Right cardiac atrium (tissue), 5 donors: ENCODE measurements at regions of chr1 and their contacts with region 1.

Region 1: DNA sequence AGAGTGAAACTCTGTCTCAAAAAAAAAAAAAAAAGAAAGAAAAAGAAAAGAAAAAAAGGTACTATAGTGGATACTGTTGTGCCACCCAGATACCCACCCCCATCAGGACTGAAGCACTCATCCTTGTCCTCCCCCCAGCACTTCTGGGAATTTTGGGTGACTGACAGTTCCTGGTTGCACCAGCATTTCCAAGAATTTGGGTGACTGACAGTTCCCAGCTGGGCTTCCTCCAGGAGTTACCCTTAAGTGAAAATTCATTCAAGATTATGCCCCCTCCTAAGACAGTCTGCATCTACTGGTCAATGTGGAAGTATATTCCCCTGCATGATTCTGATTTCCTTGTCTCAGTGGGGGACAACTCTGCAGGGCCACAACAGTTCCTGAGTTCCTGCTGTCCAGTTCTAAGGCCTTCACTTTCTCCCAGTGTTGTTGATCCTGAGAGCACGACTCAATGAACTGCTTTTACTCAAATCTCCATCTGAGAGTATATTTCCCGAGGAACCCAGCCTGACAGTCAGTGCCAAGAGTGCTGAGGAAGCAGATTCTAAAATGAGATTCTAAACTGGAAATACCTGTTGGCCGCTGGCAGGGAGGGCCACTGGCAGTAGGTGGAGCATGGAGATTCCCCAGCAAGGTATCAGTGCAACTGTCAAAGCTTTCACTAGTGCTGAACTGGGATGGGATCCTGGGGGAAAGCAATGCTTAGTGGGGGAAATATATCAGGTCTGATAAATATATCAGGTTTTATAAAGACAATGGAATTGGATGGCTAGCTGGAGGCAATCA is 18.5 kb downstream of the RIIAD1 start:
- DNase-seq: no peak
- ATAC-seq: no peak
- H3K4me3 ChIP-seq: no peak overlapping the region
- H3K27ac ChIP-seq: no peak overlapping the region
- H3K4me1 ChIP-seq: no peaks in the 10 kb centered on the region
- H3K27me3 ChIP-seq: no peaks in the 10 kb centered on the region

Region 2: DNA sequence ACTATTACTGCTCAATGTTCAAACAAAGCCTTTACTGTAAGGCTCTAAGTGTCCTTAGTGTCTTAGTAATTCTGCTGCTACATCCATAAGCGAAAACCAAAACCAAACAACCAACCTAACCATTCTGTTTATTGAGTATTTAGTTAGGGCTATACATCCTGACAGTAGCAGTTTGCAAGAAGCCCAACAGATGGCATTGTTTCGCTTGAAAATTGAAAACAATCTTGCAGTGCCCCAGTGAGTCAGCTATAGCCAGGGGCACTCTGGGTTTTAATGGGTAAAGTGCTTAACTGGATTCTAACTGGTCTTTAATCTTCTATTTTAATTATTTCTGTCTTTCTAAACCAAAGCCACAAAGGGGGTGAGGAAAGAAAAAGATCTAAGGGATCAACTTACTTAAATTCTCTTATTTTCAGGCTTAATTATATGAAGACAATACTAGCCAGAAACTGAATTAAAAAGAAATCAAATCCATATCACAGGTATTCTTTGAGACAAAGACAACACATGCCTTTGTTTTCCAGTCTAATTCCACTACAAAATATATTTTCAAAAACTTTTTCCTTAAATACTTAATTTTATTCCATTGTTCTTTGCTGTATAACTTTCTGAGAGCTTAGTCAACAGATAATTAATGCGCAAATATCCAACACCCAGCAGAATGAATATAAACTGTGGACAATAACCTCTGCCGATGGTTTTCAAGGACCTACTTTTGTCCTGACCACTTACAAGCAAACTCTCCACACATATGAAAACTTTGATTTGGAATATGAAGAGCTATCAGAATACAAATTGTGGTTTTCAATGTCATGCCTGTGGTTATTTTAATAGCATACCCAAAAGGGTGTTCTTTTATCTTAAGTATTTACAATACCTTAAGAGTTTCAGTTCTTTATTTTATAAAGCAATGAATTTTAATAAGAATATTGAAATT is 295.7 kb before region 1 on chr1:
- intact Hi-C with region 1: loop called in 2 of 4 experiments (anchors 10 kb)
- DNase-seq: peak in 1 of 3 donors; percentile 20
- ATAC-seq: peak; percentile 87 to 89
- H3K4me3 ChIP-seq: no peak overlapping the region
- H3K27ac ChIP-seq: no peak overlapping the region
- H3K4me1 ChIP-seq: peaks cover 5% of the 10 kb centered on the region
- H3K27me3 ChIP-seq: no peaks in the 10 kb centered on the region

Region 3: GRCh38 chr1:151534665-151535278 is 205.0 kb before region 1 on chr1:
- intact Hi-C with region 1: loop called in 2 of 4 experiments (anchors 5 kb)
- DNase-seq: peak; percentile 75 to 92 (median 89)
- ATAC-seq: peak; percentile 71 to 74
- H3K4me3 ChIP-seq: no peak overlapping the region
- H3K27ac ChIP-seq: no peak overlapping the region
- H3K4me1 ChIP-seq: peaks cover 6% of the 10 kb centered on the region
- H3K27me3 ChIP-seq: no peaks in the 10 kb centered on the region

Region 4: GRCh38 chr1:151594143-151594625 is 145.6 kb before region 1 on chr1:
- intact Hi-C with region 1: loop called (anchors 5 to 10 kb)
- DNase-seq: peak; percentile 68 to 91 (median 85)
- ATAC-seq: peak; percentile 50 to 73
- H3K4me3 ChIP-seq: no peak overlapping the region
- H3K27ac ChIP-seq: no peak overlapping the region
- H3K4me1 ChIP-seq: no peaks in the 10 kb centered on the region
- H3K27me3 ChIP-seq: no peaks in the 10 kb centered on the region

Region 5: DNA sequence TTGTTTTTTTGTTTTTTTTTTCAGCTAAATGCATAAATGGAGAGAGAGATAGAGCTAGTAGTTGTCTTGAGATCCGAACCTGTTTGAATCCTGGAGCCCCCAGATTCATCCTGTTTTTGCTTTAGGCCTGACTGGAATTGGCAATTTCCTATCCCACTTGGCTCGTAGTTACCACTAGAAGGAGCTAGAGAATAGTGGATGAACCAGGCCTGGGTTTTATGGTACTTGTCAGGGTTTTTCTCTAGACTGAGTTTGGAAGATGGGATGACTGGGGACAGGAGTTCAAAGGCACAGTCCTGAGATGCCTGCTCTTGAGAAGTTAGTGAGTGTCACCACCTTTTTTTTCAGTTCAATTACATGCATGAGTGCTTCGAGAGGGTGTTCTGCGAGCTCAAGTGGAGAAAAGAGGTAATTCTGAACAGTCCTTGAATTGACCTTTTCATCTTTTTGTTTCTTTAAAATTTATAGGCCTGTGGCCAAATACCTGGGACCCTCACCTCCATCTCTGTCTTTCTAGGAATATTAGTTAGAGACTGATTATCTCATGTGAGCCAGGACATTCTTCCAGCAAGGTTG is 46.6 kb before region 1 on chr1:
- intact Hi-C with region 1: loop called in 1 of 4 experiments (anchors 2 kb)
- DNase-seq: no peak
- ATAC-seq: no peak
- H3K4me3 ChIP-seq: no peak overlapping the region
- H3K27ac ChIP-seq: no peak overlapping the region
- H3K4me1 ChIP-seq: no peaks in the 10 kb centered on the region
- H3K27me3 ChIP-seq: no peaks in the 10 kb centered on the region

Region 6: DNA sequence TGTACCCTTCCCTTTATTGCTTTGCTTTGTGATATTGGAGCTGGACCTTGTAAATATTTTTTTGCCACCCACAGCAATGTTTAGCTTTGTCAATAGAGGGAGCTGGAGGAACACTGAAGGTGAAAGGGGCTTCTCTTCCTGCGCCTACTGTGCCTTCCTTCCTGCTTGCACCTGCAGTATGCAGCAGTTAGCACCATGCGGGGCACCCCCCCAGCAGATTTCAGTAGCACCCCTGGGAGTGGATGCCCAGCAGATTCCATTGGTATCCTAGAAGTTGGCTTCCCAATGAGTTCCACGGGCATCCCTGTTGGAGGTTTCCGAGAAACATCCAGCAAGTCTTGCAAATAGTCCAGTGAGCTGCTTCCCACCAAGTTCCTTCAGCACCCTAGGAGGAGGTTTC is 228.3 kb after region 1 on chr1:
- intact Hi-C with region 1: no loop called
- DNase-seq: peak in 1 of 3 donors; percentile 61
- ATAC-seq: peak; percentile 60 to 65
- H3K4me3 ChIP-seq: no peak overlapping the region
- H3K27ac ChIP-seq: no peak overlapping the region
- H3K4me1 ChIP-seq: peaks cover 4% of the 10 kb centered on the region
- H3K27me3 ChIP-seq: no peaks in the 10 kb centered on the region

Region 7: DNA sequence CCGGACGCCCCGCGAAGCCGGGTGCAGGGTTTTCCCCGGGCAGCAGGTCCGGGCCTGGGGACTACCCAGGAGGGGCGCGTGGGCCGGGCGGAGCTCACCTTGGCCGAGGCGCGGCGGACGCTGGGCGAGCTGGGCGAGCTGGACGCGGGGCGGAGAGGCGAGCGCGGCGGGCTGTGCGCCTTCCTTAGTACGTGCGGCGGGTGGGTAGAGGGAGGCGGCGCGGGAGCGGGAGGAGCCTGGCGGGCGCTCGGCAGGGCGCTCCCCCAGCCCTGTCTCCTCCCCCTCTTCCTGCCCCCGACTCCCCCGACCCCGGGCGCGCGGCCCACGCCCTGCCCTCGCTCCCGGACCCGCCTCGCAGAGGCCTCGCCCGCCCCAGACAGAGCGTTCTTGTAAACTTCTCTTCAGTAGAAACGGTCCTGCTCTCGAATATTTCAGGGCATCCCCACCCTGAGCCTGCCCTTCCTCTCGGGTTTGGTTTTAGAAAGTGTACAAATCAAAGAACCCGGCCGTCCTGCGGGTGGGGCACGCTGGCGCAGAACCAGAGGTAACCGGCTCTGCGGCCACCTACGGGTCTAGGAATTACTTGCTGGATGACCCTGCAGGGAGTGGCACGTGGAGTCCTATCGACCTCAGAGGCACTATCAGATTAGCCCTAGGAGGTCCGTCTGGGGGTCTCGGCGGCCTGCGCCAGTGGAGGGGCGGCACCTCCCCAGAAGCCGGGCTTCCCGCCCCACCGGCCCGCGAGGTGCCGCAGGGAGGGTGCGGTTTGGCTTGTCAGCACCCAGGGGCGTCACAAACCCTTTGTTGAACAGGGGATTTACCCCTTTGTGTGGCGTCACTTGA is 254.1 kb after region 1 on chr1 and contains the start of gene S100A10:
- intact Hi-C with region 1: no loop called
- DNase-seq: peak; percentile 90 to 96 (median 95)
- ATAC-seq: peak; percentile 86 to 91
- H3K4me3 ChIP-seq: peak within 1 kb of the TSS; percentile 86
- H3K27ac ChIP-seq: peak within 1 kb of the TSS; percentile 91
- H3K4me1 ChIP-seq: peaks cover 9% of the 10 kb centered on the region
- H3K27me3 ChIP-seq: no peaks in the 10 kb centered on the region
- total RNA-seq, gene S100A10: 108 to 245 (median 200) TPM